Mammary epithelial cell (primary cell): ENCODE measurements at regions of chr1 and their contacts with region 1.

Region 1: DNA sequence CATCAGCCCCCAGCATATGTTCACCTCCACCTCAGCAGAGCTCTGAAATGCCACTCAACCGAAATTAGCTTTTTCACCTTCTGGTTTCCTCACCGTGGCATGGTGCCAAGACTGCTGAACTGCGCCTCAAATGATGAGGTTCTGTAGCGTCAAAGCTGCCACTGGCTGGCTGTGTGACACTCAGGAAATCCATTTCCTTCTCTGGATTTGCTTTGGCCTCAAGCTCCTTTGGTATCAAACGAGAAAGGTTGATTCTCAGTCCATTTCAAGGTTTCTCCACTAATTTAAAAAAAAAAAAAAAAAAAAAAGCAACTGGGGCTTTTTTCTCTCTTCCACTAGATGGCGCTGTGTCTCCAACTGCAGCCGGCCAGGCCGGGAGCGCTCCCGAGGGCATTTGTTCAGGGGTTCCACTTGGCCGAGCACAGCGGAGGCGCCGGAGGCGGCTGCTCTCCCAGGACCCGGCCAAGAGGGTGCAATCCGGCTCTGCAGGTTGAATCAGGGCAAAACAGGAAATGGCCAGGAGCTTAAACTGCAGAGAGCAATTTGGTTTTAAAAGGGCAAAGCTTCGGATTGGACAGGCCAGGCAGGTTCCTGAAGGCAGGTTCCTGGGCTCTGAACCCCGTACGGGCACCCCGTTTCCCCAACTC is 26.5 kb upstream of the PLA2G2C start:
- DNase-seq: peak; percentile 80
- H3K4me3 ChIP-seq: no peak overlapping the region
- H3K27ac ChIP-seq: peak overlapping the region; percentile 97
- H3K4me1 ChIP-seq: peaks cover 41% of the 10 kb centered on the region
- H3K27me3 ChIP-seq: no peaks in the 10 kb centered on the region
- CTCF ChIP-seq: peak; percentile 58 to 84

Region 2: GRCh38 chr1:20100632-20101355 is 112.0 kb before region 1 on chr1:
- CTCF ChIA-PET with region 1: no interaction called
- dilution Hi-C with region 1: no loop called
- in situ Hi-C with region 1: no loop called
- intact Hi-C with region 1: loop called (anchors 1 kb)
- DNase-seq: peak; percentile 57
- H3K4me3 ChIP-seq: no peak overlapping the region
- H3K27ac ChIP-seq: no peak overlapping the region
- H3K4me1 ChIP-seq: peaks cover 12% of the 10 kb centered on the region
- H3K27me3 ChIP-seq: no peaks in the 10 kb centered on the region
- CTCF ChIP-seq: peak; percentile 86 to 93

Region 3: GRCh38 chr1:20355831-20356735 is 143.3 kb after region 1 on chr1:
- CTCF ChIA-PET with region 1: interaction called, 12 read pairs
- dilution Hi-C with region 1: no loop called
- in situ Hi-C with region 1: no loop called
- intact Hi-C with region 1: loop called (anchors 2 kb)
- DNase-seq: peak; percentile 87
- H3K4me3 ChIP-seq: no peak overlapping the region
- H3K27ac ChIP-seq: peak overlapping the region; percentile 61
- H3K4me1 ChIP-seq: peaks cover 38% of the 10 kb centered on the region
- H3K27me3 ChIP-seq: no peaks in the 10 kb centered on the region
- CTCF ChIP-seq: no peak

Region 4: GRCh38 chr1:20430355-20431175 is 217.8 kb after region 1 on chr1:
- CTCF ChIA-PET with region 1: no interaction called
- dilution Hi-C with region 1: no loop called
- in situ Hi-C with region 1: loop called in 1 of 2 experiments (anchors 5 kb)
- intact Hi-C with region 1: loop called (anchors 1 kb)
- DNase-seq: no peak
- H3K4me3 ChIP-seq: no peak overlapping the region
- H3K27ac ChIP-seq: no peak overlapping the region
- H3K4me1 ChIP-seq: peaks cover 14% of the 10 kb centered on the region
- H3K27me3 ChIP-seq: no peaks in the 10 kb centered on the region
- CTCF ChIP-seq: peak; percentile 80 to 89

Region 5: GRCh38 chr1:20589331-20590278 is 376.8 kb after region 1 on chr1:
- CTCF ChIA-PET with region 1: interaction called, 29 read pairs
- dilution Hi-C with region 1: no loop called
- in situ Hi-C with region 1: no loop called
- intact Hi-C with region 1: no loop called
- DNase-seq: no peak
- H3K4me3 ChIP-seq: peak overlapping the region; percentile 67 to 85 (median 69)
- H3K27ac ChIP-seq: peak overlapping the region; percentile 92
- H3K4me1 ChIP-seq: peaks cover 10% of the 10 kb centered on the region
- H3K27me3 ChIP-seq: no peaks in the 10 kb centered on the region
- CTCF ChIP-seq: no peak